Activated CD4-positive, alpha-beta memory T cell treated with anti-CD3 and anti-CD28 coated beads, Interleukin-2, amount 10 ng/mL, durations not matched to agents 7 days and 5 days (primary cell): ENCODE measurements at regions of chr9 and their contacts with region 1.

Region 1: GRCh38 chr9:72022841-72023240 is 37.6 kb downstream of the C9orf57 start:
- DNase-seq: no peak
- H3K4me3 Mint-ChIP-seq: no peak overlapping the region
- H3K27ac Mint-ChIP-seq: no peak overlapping the region
- H3K4me1 Mint-ChIP-seq: peaks cover 9% of the 10 kb centered on the region
- H3K27me3 Mint-ChIP-seq: no peaks in the 10 kb centered on the region

Region 2: DNA sequence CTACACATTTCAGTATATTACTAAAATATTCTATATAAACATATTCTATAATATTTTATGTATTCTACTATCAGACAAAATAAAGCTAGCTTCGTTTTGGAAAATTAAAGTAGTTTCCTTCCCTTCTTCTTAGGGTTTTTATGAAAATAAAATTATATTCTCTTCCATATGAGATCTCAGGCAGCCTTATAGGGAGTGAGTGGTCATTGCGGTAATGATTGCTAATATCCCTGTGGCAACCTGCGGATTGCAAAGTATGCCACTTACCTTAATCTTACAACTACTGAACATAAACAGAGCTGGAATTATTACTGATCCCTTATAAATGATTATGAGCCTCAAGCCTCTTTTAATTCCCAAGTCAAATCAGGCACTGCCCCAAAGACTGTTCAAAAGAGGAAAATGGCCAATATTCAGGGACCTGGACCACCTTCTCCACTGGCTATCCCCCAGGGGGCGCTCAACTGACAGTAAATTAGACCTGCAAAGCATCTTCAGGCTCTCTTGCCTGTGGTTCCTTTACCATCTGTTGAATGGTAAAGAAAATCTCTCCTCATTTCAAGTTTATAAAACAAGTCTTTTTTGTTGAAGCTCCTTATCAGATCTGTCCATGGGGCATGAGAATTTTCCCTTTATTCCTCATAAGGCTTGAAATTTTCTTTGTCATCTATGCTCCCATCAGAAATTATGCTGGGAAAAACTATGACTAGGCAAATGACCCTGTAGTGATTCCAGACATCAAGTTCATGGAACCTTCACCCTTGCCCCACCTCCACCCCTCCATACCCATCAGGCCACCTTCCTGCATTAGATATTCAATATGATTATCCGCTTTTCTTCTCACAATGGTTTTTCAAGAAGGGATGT is 418.4 kb before region 1 on chr9:
- CTCF ChIA-PET with region 1: interaction called, 19 read pairs
- POLR2A ChIA-PET with region 1: no interaction called
- DNase-seq: peak; percentile 85
- H3K4me3 Mint-ChIP-seq: no peak overlapping the region
- H3K27ac Mint-ChIP-seq: no peak overlapping the region
- H3K4me1 Mint-ChIP-seq: no peaks in the 10 kb centered on the region
- H3K27me3 Mint-ChIP-seq: peaks cover 7% of the 10 kb centered on the region

Region 3: DNA sequence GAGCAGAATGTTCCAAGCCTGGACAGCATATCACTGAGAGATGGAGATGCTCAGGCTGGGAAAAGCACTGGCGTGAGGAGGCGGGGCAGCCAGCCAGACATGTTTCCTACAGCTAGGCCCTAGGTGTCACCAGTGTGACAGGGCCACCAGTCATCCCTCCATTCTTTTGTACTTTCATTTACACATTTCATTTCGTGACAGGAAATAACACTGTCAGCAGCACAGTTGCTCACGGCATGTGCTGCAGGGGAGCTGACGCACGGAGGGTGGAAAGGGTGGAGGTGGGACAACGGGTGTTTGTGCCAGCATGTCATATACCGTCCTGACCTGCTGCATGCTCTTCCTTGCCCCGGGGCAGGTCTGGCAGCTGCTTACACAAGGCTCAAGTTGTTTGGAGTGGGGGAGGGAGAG is 239.7 kb before region 1 on chr9:
- CTCF ChIA-PET with region 1: interaction called, 19 read pairs
- POLR2A ChIA-PET with region 1: interaction called, 6 read pairs
- DNase-seq: peak; percentile 90
- H3K4me3 Mint-ChIP-seq: peak overlapping the region; percentile 59
- H3K27ac Mint-ChIP-seq: peak overlapping the region; percentile 98
- H3K4me1 Mint-ChIP-seq: peaks cover 46% of the 10 kb centered on the region
- H3K27me3 Mint-ChIP-seq: no peaks in the 10 kb centered on the region

Region 4: DNA sequence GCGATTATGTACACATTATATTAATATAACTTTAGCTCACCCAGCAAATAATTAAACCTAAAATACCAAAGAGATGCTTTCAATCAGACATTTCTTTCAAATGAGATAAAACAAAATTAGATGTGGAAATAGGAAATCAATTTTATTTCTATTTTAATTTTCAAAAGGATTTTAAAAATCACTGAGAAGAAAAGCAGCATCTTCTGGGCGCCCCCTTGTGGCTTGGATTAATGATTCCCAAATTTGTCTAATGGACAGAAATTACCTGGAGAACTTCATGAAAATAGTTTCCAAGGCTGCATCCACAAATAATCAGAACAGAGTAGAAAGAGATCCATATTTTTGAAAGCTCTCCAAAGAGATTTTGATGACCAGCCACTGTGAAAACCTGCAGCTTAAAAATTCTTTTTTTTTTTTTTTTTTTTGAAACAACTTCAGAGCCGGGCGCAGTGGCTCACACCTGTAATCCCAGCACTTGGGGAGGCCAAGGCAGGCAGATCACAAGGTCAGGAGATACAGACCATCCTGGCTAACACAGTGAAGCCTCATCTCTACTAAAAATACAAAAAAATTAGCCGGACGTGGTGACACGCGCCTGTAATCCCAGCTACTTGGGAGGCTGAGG is 203.6 kb before region 1 on chr9:
- CTCF ChIA-PET with region 1: interaction called, 41 read pairs
- POLR2A ChIA-PET with region 1: no interaction called
- DNase-seq: peak; percentile 36
- H3K4me3 Mint-ChIP-seq: no peak overlapping the region
- H3K27ac Mint-ChIP-seq: no peak overlapping the region
- H3K4me1 Mint-ChIP-seq: peaks cover 19% of the 10 kb centered on the region
- H3K27me3 Mint-ChIP-seq: no peaks in the 10 kb centered on the region

Region 5: GRCh38 chr9:71937898-71938297 is 84.9 kb before region 1 on chr9:
- CTCF ChIA-PET with region 1: no interaction called
- POLR2A ChIA-PET with region 1: no interaction called
- DNase-seq: no peak
- H3K4me3 Mint-ChIP-seq: no peak overlapping the region
- H3K27ac Mint-ChIP-seq: no peak overlapping the region
- H3K4me1 Mint-ChIP-seq: peaks cover 2% of the 10 kb centered on the region
- H3K27me3 Mint-ChIP-seq: no peaks in the 10 kb centered on the region

Region 6: DNA sequence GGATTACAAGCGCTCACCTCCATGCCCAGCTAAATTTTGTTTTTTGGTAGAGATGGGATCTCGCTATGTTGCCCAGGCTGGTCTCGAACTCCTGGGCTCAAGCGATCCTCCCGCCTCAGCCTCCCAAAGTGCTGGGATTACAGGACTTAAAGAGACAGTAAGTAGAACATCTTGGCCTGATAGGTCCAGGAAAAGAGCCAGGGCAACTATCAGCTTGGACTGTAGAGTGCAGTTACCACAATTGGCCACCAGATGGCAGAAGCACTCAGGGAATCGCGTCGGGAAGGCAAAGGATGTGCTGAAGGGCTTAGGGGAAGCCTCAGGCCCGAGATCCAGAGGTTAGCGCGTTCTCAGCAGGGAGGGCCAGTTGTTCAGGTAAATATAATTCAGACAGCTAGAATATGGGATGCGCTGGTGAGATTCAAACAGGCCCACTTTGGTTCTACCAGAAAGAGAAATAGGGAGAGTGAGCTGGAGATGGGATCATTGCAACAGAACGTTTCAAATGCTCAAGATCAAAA is 16.1 kb after region 1 on chr9:
- CTCF ChIA-PET with region 1: interaction called, 51 read pairs
- POLR2A ChIA-PET with region 1: no interaction called
- DNase-seq: peak; percentile 69
- H3K4me3 Mint-ChIP-seq: no peak overlapping the region
- H3K27ac Mint-ChIP-seq: no peak overlapping the region
- H3K4me1 Mint-ChIP-seq: peaks cover 4% of the 10 kb centered on the region
- H3K27me3 Mint-ChIP-seq: peaks cover 32% of the 10 kb centered on the region

Region 7: DNA sequence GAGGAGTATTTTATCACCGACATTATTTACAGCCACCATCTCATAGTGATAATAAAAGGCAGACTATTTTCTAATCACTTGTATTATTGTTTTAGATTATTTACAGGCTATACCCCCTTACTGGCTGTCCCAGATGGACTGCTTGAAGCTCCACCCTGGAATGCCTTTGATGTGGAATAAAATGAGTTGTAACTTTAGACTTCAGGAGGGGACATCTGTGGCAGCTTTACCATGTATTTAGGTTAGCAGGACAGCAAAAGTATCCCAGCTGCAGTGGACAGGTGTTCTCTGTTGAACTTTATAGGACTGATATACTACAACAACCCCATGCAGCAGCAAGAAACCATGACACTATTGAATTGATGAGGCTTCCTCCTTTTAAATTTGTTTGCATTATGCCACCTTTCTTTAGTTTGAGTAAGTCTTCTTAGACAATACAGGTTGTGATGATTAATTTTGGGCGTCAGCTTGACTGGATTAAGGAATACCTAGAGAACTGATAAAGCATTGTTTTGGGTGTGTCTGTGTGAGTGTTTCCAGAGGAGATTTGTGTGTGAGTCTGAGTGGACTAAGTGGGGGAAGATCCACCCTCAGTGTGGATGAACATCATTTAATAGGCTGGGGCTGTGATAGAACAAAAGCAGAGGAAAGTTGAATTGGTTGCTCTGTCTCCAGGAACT is 66.8 kb after region 1 on chr9:
- CTCF ChIA-PET with region 1: no interaction called
- POLR2A ChIA-PET with region 1: no interaction called
- DNase-seq: no peak
- H3K4me3 Mint-ChIP-seq: no peak overlapping the region
- H3K27ac Mint-ChIP-seq: no peak overlapping the region
- H3K4me1 Mint-ChIP-seq: no peaks in the 10 kb centered on the region
- H3K27me3 Mint-ChIP-seq: no peaks in the 10 kb centered on the region

Region 8: GRCh38 chr9:72524820-72525540 is 502.1 kb after region 1 on chr9:
- CTCF ChIA-PET with region 1: no interaction called
- POLR2A ChIA-PET with region 1: no interaction called
- DNase-seq: peak; percentile 23
- H3K4me3 Mint-ChIP-seq: no peak overlapping the region
- H3K27ac Mint-ChIP-seq: peak overlapping the region; percentile 5
- H3K4me1 Mint-ChIP-seq: peaks cover 47% of the 10 kb centered on the region
- H3K27me3 Mint-ChIP-seq: no peaks in the 10 kb centered on the region